Left lung (tissue), 14 donors: ENCODE measurements at regions of chr5 and their contacts with region 1.

Region 1: DNA sequence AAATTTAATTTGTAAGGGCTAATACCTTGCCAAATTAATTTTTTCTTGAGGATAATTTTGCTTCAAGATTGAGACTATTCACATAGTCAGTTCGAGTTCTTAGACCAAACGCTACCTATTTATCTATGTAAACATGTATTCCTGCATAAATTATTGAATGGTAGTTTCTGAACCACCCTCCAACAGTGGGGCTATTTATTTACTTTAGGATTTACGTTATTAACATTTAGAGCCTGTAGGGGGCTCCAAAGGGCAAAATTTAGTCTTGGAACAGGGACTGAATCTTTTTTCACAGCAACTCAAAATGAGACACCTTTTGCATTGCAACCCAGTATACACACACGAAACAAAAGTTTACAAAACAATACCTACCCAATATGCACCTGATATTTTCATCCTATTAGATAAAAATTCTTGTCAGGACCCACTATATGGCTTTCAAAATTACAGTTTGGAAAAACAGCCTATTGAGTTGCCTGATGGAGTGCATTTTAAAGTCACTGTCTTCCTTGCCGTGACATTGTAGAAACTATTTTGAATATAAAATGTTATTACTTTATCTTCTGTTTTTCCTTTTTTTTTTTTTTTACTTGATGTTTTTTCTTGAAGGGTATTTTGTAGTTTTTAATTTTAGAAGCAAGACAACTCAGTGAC is 47.1 kb upstream of the POU4F3 start:
- DNase-seq: peak in 2 of 4 donors; percentile 14 to 37
- ATAC-seq: peak; percentile 85
- H3K4me3 ChIP-seq: no peak overlapping the region
- H3K27ac ChIP-seq: no peak overlapping the region
- H3K4me1 ChIP-seq: no peaks in the 10 kb centered on the region
- H3K27me3 ChIP-seq: no peaks in the 10 kb centered on the region
- CTCF ChIP-seq: peak; percentile 40 to 45

Region 2: DNA sequence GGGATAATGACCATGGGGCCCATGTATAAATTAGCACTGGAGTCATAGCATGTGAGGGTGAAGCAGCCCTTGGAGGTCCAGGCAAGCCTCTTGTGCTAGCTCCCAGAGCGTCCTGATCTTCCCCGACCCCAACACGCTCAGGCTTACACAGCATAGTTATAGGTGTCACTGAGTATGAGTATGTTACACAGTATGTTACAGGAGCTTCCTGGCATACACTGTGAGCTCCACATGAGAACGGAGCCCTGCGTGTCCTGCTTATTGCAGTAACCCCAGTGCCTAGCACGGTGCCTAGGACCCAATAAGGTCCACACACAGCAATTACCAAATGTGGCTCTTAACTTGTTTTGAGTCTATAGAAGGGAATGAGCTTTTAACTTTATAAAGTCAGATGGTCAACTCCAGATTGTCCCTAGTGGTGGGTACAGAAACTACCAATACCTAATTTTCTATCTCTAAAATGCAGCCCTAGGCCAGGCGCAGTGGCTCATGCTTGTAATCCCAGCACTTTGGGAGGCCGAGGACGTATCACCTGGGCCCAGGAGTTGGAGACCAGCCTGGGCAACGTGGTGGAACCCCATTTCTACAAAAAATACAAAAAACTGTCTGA is 250.3 kb before region 1 on chr5:
- intact Hi-C with region 1: no loop called
- DNase-seq: no peak
- ATAC-seq: peak; percentile 38
- H3K4me3 ChIP-seq: no peak overlapping the region
- H3K27ac ChIP-seq: no peak overlapping the region
- H3K4me1 ChIP-seq: peaks cover 0 to 6% of the 10 kb centered on the region in 2 donors
- H3K27me3 ChIP-seq: no peaks in the 10 kb centered on the region
- CTCF ChIP-seq: peak in 1 of 2 donors; percentile 36

Region 3: DNA sequence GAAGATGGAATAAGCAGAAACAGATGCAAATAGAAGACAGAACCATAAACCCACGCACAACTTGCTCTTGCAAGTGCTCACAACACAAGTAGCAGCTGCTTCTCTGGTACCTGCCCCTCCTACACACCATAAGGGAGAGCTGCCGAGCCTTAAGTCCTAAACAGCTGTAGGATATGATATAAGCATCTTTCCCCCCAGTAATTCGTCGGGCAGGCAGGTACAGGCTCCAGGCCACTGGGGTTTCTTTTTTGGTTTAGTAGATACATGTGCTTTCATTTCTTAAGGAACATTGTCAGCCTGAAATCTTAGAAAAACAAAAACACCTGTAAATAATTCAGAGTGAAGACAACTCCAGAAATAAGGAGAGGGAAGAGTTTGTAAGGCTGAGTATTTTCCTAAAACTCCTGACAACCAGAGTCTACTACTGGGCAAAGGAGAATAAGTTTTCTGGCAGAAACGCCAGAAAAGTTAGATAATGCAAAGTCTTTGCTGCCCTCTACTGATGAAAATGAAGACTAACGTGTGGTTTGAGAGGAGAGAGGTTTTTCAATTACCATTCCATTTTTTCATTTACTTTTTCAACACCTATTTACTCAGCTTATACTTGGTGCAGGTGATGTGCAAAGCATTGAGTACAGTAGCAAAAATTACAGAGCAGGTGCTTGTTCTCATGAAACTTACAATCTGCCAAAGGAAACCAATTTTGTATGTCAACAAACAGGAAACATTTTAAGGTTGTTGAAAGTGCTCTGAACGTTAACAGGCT is 135.5 kb after region 1 on chr5:
- intact Hi-C with region 1: loop called in 1 of 2 experiments (anchors 5 kb)
- DNase-seq: peak in 2 of 4 donors; percentile 22 to 48
- ATAC-seq: peak; percentile 88
- H3K4me3 ChIP-seq: no peak overlapping the region
- H3K27ac ChIP-seq: no peak overlapping the region
- H3K4me1 ChIP-seq: no peaks in the 10 kb centered on the region
- H3K27me3 ChIP-seq: peaks cover 0 to 13% of the 10 kb centered on the region in 2 donors
- CTCF ChIP-seq: peak; percentile 52 to 54